ENCODE measurements at regions of chr10 and their contacts with region 1.

Region 1: GRCh38 chr10:14325325-14325955 is 5.3 kb downstream of the FRMD4A start:
- H3K4me3 ChIP-seq: no peak overlapping the region
- H3K27ac ChIP-seq: no peak overlapping the region
- H3K4me1 ChIP-seq: 0 out of 2 replicates have a peak, but pooled peaks cover 3% of the 10 kb centered on the region
- CTCF ChIP-seq: no peak

Region 2: DNA sequence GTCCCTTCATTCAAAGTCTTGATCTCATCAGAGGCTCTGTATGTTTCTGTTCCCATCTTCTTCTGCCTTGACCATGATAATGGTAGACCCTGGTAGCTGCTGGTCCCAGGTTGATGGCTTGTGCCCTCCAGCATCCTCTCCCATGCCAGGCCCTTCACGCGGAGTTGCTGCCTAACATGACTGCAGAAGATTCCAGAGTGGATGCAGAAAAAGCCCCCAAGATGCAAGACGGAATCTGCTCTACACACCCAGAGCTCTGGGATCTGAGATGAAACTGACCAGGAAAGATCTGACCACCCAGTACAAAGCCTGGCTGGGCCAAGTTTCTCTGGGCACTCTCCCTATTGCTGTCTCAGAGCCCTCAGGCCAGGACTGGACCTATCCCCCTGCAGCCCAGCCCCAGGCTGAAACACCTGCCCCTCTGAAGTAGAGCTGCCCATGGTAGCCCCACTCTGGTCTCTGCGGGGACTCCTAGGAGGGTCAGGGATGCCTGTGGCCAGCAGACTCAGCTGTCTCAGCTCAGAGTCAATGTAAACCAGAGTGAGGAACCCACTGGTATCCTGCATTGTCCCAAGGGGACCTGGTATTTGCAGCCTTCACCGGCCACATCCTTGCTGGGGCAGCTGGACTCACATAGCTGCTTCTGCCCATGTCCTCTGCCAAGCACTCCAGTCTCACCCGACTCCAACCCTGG is 14.8 kb after region 1 on chr10:
- CTCF ChIA-PET with region 1: interaction called, 10 read pairs
- POLR2A ChIA-PET with region 1: no interaction called
- H3K4me3 ChIP-seq: no peak overlapping the region
- H3K27ac ChIP-seq: no peak overlapping the region
- H3K4me1 ChIP-seq: no peaks in the 10 kb centered on the region
- CTCF ChIP-seq: no peak

Region 3: GRCh38 chr10:14507176-14507575 is 181.7 kb after region 1 on chr10:
- CTCF ChIA-PET with region 1: no interaction called
- POLR2A ChIA-PET with region 1: no interaction called
- H3K4me3 ChIP-seq: no peak overlapping the region
- H3K27ac ChIP-seq: no peak overlapping the region
- H3K4me1 ChIP-seq: no peaks in the 10 kb centered on the region
- CTCF ChIP-seq: no peak

Measured in HEK293 (cell line).